CD8-positive, alpha-beta memory T cell (primary cell): ENCODE measurements at regions of chr7 and their contacts with region 1.

Region 1: GRCh38 chr7:5396999-5397663 is 26.5 kb downstream of the TNRC18 start:
- DNase-seq: peak; percentile 89 to 96 (median 92)
- H3K4me3 ChIP-seq: peak overlapping the region; percentile 99
- H3K4me3 Mint-ChIP-seq: peak overlapping the region; percentile 81 to 92 (median 87)
- H3K27ac ChIP-seq: peak overlapping the region; percentile 89
- H3K27ac Mint-ChIP-seq: peak overlapping the region; percentile 88 to 97 (median 94)
- H3K4me1 ChIP-seq: peaks cover 31% of the 10 kb centered on the region
- H3K4me1 Mint-ChIP-seq: peaks cover 25 to 44% (median 34%) of the 10 kb centered on the region in 3 donors
- H3K27me3 ChIP-seq: no peaks in the 10 kb centered on the region
- H3K27me3 Mint-ChIP-seq: no peaks in the 10 kb centered on the region

Region 2: DNA sequence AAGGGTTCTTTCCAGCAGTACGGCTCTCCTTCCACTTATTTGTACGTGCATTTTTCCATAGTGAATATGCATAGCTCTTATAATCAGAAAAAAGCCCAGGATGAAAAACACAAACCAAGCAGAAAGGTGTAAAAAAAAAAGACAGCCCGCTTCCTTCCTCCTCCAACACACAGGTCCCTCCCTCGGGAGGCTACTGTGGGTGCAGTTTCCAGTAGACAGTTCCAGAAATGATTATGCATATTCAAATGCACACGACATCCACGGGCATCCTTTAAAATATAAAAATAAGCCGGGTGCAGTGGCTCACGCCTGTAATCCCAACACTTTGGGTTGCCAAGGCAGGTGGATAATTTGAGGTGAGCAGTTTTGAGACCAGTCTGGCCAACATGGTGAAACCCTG is 33.4 kb before region 1 on chr7:
- CTCF ChIA-PET with region 1: interaction called, 11 read pairs
- POLR2A ChIA-PET with region 1: interaction called, 4 read pairs
- DNase-seq: no peak
- H3K4me3 ChIP-seq: no peak overlapping the region
- H3K4me3 Mint-ChIP-seq: peak overlapping the region in 3 of 7 donors; percentile 44 to 63 (median 59)
- H3K27ac ChIP-seq: no peak overlapping the region
- H3K27ac Mint-ChIP-seq: peak overlapping the region in 3 of 8 donors; percentile 10 to 64 (median 21)
- H3K4me1 ChIP-seq: peaks cover 5% of the 10 kb centered on the region
- H3K4me1 Mint-ChIP-seq: peaks cover 13 to 26% (median 23%) of the 10 kb centered on the region in 3 donors
- H3K27me3 ChIP-seq: no peaks in the 10 kb centered on the region
- H3K27me3 Mint-ChIP-seq: no peaks in the 10 kb centered on the region

Region 3: GRCh38 chr7:5423844-5424688 is 26.9 kb after region 1 on chr7:
- CTCF ChIA-PET with region 1: interaction called, 13 read pairs
- POLR2A ChIA-PET with region 1: interaction called, 16 read pairs
- DNase-seq: peak in 4 of 5 donors; percentile 26 to 64 (median 42)
- H3K4me3 ChIP-seq: peak overlapping the region; percentile 37
- H3K4me3 Mint-ChIP-seq: peak overlapping the region; percentile 76 to 89 (median 83)
- H3K27ac ChIP-seq: peak overlapping the region; percentile 85
- H3K27ac Mint-ChIP-seq: peak overlapping the region in 5 of 8 donors; percentile 38 to 83 (median 53)
- H3K4me1 ChIP-seq: peaks cover 62% of the 10 kb centered on the region
- H3K4me1 Mint-ChIP-seq: peaks cover 34 to 77% (median 44%) of the 10 kb centered on the region in 3 donors
- H3K27me3 ChIP-seq: peaks cover 66% of the 10 kb centered on the region
- H3K27me3 Mint-ChIP-seq: peaks cover 48 to 63% of the 10 kb centered on the region in 2 donors

Region 4: DNA sequence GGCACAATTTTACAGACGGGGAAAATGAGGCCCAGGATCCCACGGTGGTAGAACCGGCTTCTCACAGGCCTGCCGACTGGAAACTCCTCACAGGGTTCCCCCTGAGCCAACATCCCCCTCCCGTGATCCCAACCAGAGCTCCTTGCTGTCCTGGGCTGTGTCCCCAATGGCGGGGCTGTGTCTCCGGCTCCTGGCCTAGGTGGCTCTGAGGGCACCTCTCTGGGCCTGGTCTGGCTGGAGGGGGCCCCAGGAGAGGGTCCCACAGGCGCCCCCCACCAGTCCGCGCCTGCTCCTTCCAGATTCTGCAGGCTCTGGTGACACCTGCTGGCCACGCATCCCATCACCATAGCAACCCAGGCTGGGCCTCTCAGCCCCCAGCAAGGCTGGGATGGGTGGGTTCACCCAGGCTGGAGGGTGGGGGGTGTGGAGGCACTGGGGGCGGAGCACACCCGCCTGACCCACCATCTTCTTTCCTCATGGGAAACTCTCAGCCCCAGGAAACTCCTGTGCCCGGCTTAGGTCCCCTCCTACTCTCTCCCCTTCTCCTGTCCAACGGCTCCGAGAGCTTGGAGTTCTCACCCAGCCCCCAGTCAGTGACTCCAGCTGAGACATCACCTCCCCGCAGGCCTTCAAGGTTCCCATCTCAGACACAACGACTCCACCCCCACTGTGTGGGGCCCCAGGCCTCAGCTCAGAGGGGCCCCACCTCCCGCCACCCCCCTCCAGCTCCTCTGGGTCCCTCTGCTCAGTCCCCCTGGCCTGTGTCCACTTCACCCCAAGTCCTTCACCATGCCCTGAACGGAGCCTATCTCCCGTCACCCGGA is 53.6 kb after region 1 on chr7:
- CTCF ChIA-PET with region 1: interaction called, 21 read pairs
- POLR2A ChIA-PET with region 1: no interaction called
- DNase-seq: peak in 3 of 5 donors; percentile 27 to 65 (median 47)
- H3K4me3 ChIP-seq: no peak overlapping the region
- H3K4me3 Mint-ChIP-seq: no peak overlapping the region
- H3K27ac ChIP-seq: no peak overlapping the region
- H3K27ac Mint-ChIP-seq: peak overlapping the region in 1 of 8 donors; percentile 88
- H3K4me1 ChIP-seq: no peaks in the 10 kb centered on the region
- H3K4me1 Mint-ChIP-seq: no peaks in the 10 kb centered on the region
- H3K27me3 ChIP-seq: no peaks in the 10 kb centered on the region
- H3K27me3 Mint-ChIP-seq: peaks cover 0 to 2% of the 10 kb centered on the region in 2 donors

Region 5: DNA sequence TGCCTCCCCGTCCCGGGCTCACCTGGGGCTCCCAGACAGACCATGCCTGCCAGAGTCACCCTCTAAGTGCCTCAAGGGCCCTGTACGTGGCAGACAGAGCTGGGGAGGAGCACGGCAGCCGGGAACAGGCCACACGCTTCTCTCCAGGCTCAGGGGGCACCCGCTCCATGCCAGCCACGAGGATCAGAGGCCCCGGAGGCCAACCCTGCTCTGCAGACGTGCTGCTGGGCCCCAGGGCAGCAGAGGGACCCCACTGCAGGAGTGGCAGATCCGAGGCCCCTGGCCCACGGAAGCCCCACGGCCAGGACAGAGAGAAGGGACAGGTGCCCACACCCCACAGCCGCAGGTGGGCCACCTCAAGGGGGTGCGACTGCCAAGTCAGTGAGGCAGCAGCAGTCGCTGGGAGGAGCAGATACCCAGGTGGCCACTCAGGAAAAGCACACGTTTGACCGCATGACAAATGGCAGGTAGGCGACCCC is 84.9 kb after region 1 on chr7:
- CTCF ChIA-PET with region 1: interaction called, 10 read pairs
- POLR2A ChIA-PET with region 1: no interaction called
- DNase-seq: no peak
- H3K4me3 ChIP-seq: no peak overlapping the region
- H3K4me3 Mint-ChIP-seq: no peak overlapping the region
- H3K27ac ChIP-seq: no peak overlapping the region
- H3K27ac Mint-ChIP-seq: no peak overlapping the region
- H3K4me1 ChIP-seq: peaks cover 2% of the 10 kb centered on the region
- H3K4me1 Mint-ChIP-seq: peaks cover 0 to 10% (median 7%) of the 10 kb centered on the region in 3 donors
- H3K27me3 ChIP-seq: no peaks in the 10 kb centered on the region
- H3K27me3 Mint-ChIP-seq: peaks cover 0 to 2% of the 10 kb centered on the region in 2 donors

Region 6: DNA sequence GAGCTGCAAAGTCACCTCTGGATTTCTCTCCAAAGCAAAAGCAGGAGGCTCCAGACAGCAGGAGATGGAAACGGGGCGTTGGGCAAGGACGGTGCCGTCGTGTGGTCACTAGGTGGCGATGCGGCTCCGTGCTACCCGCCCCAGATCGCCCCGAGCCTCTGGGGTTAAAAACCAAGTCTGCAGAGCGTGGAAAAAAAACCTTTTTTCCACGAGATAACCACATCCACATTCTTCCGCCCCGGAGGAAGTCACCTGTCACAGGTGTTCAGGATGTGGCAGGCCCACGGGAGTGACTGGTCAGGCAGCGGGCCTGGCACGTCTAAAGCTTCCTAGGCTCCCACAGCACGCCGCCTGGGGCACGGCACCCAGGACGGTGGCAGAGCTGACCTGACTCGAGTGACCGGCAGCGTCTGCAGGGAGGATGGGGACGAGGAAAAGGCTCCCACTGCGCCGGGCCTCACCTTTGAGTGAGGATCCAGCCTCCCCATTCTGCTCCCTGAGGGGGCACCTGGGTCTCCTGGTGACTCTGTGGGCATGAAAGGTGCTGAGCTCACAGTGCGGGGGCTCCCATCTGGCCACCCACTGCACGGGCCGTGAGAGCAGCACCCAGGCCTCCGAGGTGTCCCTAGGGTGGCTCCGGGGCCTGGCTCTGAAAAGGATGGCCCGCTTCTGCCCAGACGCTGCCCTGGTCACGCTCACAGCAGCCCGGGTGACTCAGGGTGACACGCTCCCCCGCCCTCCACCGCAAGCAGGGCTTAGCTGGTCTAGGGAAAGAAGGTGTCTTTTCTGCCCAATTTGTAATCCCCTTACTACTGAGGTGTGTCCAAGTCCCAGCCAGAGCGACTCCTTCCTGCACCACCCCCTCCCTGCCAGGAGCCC is 97.8 kb after region 1 on chr7:
- CTCF ChIA-PET with region 1: interaction called, 14 read pairs
- POLR2A ChIA-PET with region 1: no interaction called
- DNase-seq: peak; percentile 67 to 83 (median 73)
- H3K4me3 ChIP-seq: peak overlapping the region; percentile 25
- H3K4me3 Mint-ChIP-seq: peak overlapping the region in 6 of 7 donors; percentile 3 to 73 (median 58)
- H3K27ac ChIP-seq: no peak overlapping the region
- H3K27ac Mint-ChIP-seq: peak overlapping the region in 5 of 8 donors; percentile 23 to 51 (median 24)
- H3K4me1 ChIP-seq: peaks cover 19% of the 10 kb centered on the region
- H3K4me1 Mint-ChIP-seq: peaks cover 8 to 24% (median 23%) of the 10 kb centered on the region in 3 donors
- H3K27me3 ChIP-seq: no peaks in the 10 kb centered on the region
- H3K27me3 Mint-ChIP-seq: no peaks in the 10 kb centered on the region